MCF 10A (cell line): ENCODE measurements at regions of chr1 and their contacts with region 1.

Region 1: DNA sequence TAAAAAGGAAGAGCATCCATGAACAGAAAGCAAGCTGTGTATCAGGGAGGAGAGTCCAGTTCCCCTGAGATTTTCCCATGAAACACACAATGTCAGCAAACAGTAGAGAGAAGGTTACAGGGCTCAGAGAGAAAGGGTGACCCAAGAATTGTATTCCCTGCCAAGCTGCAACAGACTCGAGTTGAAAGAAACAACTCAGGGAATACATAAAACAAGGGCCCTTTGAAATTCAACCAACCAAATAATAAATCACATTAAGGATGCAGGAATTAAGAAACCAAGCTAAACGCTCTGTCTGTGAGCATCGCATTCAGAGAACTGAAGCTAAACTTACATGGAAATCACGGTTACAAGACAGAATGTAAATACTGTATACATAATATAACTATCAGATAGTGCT is 20.2 kb downstream of the S100A16 start:
- DNase-seq: no peak
- H3K4me3 Mint-ChIP-seq: no peak overlapping the region
- H3K27ac Mint-ChIP-seq: no peak overlapping the region
- H3K4me1 Mint-ChIP-seq: peaks cover 10% of the 10 kb centered on the region
- H3K27me3 Mint-ChIP-seq: no peaks in the 10 kb centered on the region
- CTCF ChIP-seq: no peak

Region 2: GRCh38 chr1:153485863-153486262 is 106.9 kb before region 1 on chr1:
- CTCF ChIA-PET with region 1: no interaction called
- POLR2A ChIA-PET with region 1: no interaction called
- intact Hi-C with region 1: no loop called
- DNase-seq: peak; percentile 61
- H3K4me3 Mint-ChIP-seq: no peak overlapping the region
- H3K27ac Mint-ChIP-seq: no peak overlapping the region
- H3K4me1 Mint-ChIP-seq: peaks cover 38% of the 10 kb centered on the region
- H3K27me3 Mint-ChIP-seq: peaks cover 59% of the 10 kb centered on the region
- CTCF ChIP-seq: no peak

Region 3: GRCh38 chr1:153577624-153578051 is 15.1 kb before region 1 on chr1:
- CTCF ChIA-PET with region 1: interaction called, 19 read pairs
- POLR2A ChIA-PET with region 1: interaction called, 15 read pairs
- intact Hi-C with region 1: no loop called
- DNase-seq: no peak
- H3K4me3 Mint-ChIP-seq: no peak overlapping the region
- H3K27ac Mint-ChIP-seq: no peak overlapping the region
- H3K4me1 Mint-ChIP-seq: peaks cover 25% of the 10 kb centered on the region
- H3K27me3 Mint-ChIP-seq: no peaks in the 10 kb centered on the region
- CTCF ChIP-seq: no peak

Region 4: DNA sequence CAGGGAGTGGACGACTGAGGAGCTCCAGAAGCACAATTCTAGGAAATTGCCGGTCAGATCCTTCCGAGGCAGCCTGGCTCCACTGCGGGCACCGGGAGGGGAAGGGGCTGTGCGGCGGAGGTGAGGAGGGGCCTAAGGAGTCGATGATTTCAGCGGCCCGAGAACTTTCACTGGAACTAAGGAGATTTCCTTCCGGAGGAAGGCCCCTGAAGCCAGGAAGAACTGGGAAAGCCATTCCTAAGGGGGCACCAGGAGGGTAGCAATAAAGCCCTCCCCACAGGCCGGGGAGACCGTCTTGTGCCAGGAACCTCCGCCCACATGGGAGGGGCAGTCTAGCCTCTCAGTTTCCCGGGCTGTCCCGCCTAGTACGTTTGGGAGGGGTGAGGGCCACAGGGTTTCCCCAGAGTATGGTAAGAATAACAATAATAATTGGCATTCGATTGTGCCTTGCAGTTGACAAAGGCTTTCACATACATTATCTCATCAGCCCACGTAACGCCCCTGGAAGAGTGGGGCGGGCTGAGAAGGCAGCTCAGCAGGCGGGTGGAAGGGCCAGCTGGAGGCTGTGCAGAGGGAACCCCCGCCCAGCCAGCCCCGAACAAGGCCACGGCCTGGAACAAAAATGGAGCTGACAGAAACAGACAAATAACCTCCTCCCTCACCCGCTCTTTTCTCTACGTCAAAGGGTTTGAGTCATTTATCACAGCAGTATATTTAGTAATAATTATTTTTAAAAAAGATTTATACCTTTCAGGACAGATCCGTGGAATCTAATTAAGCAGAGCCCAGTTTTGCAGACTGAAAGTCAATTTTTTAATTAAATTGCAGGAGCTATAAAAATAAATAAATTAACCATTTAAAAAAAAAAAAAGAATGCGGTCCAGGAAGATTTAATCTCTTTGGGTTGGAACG is 105.5 kb after region 1 on chr1:
- CTCF ChIA-PET with region 1: no interaction called
- POLR2A ChIA-PET with region 1: no interaction called
- intact Hi-C with region 1: no loop called
- DNase-seq: no peak
- H3K4me3 Mint-ChIP-seq: no peak overlapping the region
- H3K27ac Mint-ChIP-seq: no peak overlapping the region
- H3K4me1 Mint-ChIP-seq: peaks cover 17% of the 10 kb centered on the region
- H3K27me3 Mint-ChIP-seq: no peaks in the 10 kb centered on the region
- CTCF ChIP-seq: no peak